Activated CD4-positive, alpha-beta memory T cell treated with anti-CD3 and anti-CD28 coated beads, Interleukin-2, amount 10 ng/mL, durations not matched to agents 7 days and 5 days (primary cell): ENCODE measurements at regions of chr2 and their contacts with region 1.

Region 1: GRCh38 chr2:199488772-199489400 is 31.1 kb upstream of the SATB2 start:
- DNase-seq: peak; percentile 45
- H3K4me3 Mint-ChIP-seq: no peak overlapping the region
- H3K27ac Mint-ChIP-seq: no peak overlapping the region
- H3K4me1 Mint-ChIP-seq: no peaks in the 10 kb centered on the region
- H3K27me3 Mint-ChIP-seq: peaks cover 5% of the 10 kb centered on the region

Region 2: DNA sequence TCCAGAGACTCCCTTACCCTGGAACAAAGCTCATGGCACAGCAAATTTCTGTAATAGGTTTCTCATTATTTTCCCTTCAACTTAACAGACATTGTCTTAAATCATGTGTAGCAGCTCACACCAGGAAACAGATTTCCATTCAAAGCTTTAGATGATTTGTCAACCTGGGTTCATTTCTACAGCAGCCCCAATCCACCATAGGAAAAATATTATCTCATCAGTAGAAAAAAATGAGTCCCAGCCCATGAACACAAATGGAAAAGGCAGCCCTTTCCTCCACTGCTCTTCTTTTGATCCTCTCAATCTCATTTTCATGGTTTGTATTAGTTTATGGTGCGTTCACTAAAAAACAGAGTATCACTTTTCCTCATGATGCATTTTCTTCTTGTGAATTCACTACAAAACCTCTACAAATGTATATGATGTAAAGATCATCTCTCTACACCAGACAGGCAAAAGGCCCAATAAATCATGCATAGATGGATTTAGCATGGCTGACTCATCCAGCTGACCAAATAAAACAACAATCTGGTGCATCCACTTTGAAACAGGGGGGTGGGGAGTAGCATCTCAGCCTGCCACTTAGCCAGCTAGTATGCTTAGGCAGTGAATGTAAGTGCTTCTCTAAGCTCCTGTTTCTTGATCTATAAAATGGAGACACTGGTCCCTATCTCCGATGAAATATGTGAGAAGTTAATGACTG is 109.8 kb before region 1 on chr2:
- CTCF ChIA-PET with region 1: no interaction called
- POLR2A ChIA-PET with region 1: no interaction called
- DNase-seq: no peak
- H3K4me3 Mint-ChIP-seq: no peak overlapping the region
- H3K27ac Mint-ChIP-seq: no peak overlapping the region
- H3K4me1 Mint-ChIP-seq: no peaks in the 10 kb centered on the region
- H3K27me3 Mint-ChIP-seq: peaks cover 12% of the 10 kb centered on the region

Region 3: GRCh38 chr2:199471443-199472057 is 17.3 kb before region 1 on chr2:
- CTCF ChIA-PET with region 1: interaction called, 11 read pairs
- POLR2A ChIA-PET with region 1: no interaction called
- DNase-seq: no peak
- H3K4me3 Mint-ChIP-seq: no peak overlapping the region
- H3K27ac Mint-ChIP-seq: no peak overlapping the region
- H3K4me1 Mint-ChIP-seq: peaks cover 4% of the 10 kb centered on the region
- H3K27me3 Mint-ChIP-seq: peaks cover 78% of the 10 kb centered on the region

Region 4: GRCh38 chr2:199477277-199477834 is 11.5 kb before region 1 on chr2:
- CTCF ChIA-PET with region 1: interaction called, 17 read pairs
- POLR2A ChIA-PET with region 1: no interaction called
- DNase-seq: no peak
- H3K4me3 Mint-ChIP-seq: no peak overlapping the region
- H3K27ac Mint-ChIP-seq: no peak overlapping the region
- H3K4me1 Mint-ChIP-seq: no peaks in the 10 kb centered on the region
- H3K27me3 Mint-ChIP-seq: peaks cover 23% of the 10 kb centered on the region

Region 5: GRCh38 chr2:199535445-199536177 is 46.7 kb after region 1 on chr2:
- CTCF ChIA-PET with region 1: no interaction called
- POLR2A ChIA-PET with region 1: no interaction called
- DNase-seq: no peak
- H3K4me3 Mint-ChIP-seq: no peak overlapping the region
- H3K27ac Mint-ChIP-seq: no peak overlapping the region
- H3K4me1 Mint-ChIP-seq: no peaks in the 10 kb centered on the region
- H3K27me3 Mint-ChIP-seq: no peaks in the 10 kb centered on the region

Region 6: GRCh38 chr2:200274116-200275075 is 785.5 kb after region 1 on chr2:
- CTCF ChIA-PET with region 1: no interaction called
- POLR2A ChIA-PET with region 1: no interaction called
- DNase-seq: no peak
- H3K4me3 Mint-ChIP-seq: no peak overlapping the region
- H3K27ac Mint-ChIP-seq: no peak overlapping the region
- H3K4me1 Mint-ChIP-seq: no peaks in the 10 kb centered on the region
- H3K27me3 Mint-ChIP-seq: peaks cover 15% of the 10 kb centered on the region